ENCODE measurements at regions of chr17 and their contacts with region 1.

Region 1: GRCh38 chr17:58337600-58338453 is 9.2 kb upstream of the TSPOAP1 start:
- DNase-seq: peak; percentile 98
- H3K4me3 Mint-ChIP-seq: peak overlapping the region; percentile 91
- H3K27ac Mint-ChIP-seq: peak overlapping the region; percentile 100
- H3K4me1 Mint-ChIP-seq: peaks cover 59% of the 10 kb centered on the region
- H3K27me3 Mint-ChIP-seq: no peaks in the 10 kb centered on the region

Region 2: DNA sequence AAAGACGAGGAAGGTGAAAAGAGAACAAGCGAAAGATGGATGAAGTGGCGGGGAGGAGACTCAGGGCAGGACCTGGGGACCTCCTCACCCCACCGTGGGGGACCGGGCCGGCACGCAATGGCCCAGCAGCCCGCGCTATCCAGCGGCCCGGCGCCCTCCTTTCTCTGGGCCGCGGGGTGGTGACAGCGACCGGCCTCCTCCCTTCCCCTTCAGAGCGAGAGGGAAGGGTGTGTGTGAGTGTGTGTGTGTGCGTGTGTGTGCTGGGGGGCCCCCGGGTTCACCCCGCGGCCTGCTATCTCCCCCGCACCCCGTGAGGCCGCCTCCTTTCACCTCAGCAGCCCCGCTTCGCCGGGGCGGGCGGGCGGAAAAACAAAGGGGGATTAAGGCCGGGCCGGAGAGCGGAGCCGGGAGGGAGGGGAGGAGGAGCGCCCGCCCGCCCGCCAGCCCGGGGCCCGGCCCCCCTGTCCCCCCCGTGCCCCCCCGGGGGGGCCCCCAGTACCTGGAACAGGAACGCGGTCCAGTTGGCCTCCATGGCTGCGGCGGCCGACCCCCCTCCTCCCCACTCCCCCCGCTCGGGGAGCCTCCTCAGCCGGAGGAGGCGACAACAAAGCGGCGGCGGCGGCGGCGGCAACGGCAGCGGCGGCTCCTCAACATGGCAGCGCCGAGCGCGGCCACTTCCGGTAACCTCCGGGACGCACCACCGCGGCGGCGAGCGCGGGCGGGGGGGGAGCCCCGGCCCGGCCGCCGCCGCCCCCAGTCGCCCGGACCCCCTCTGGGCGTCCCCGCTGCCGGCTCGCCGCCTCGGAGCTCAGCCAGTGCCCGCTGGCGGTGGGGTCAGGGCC is 350.0 kb before region 1 on chr17 and contains the start of gene VEZF1:
- intact Hi-C with region 1: loop called (anchors 5 kb)
- DNase-seq: peak; percentile 93
- H3K4me3 Mint-ChIP-seq: peak within 1 kb of the TSS; percentile 94
- H3K27ac Mint-ChIP-seq: peak within 1 kb of the TSS; percentile 96
- H3K4me1 Mint-ChIP-seq: peaks cover 47% of the 10 kb centered on the region
- H3K27me3 Mint-ChIP-seq: no peaks in the 10 kb centered on the region
- total RNA-seq, gene VEZF1: 35.4 and 37.3 TPM in 2 replicates

Region 3: GRCh38 chr17:58436805-58437239 is 99.0 kb after region 1 on chr17:
- intact Hi-C with region 1: no loop called
- DNase-seq: no peak
- H3K4me3 Mint-ChIP-seq: no peak overlapping the region
- H3K27ac Mint-ChIP-seq: no peak overlapping the region
- H3K4me1 Mint-ChIP-seq: no peaks in the 10 kb centered on the region
- H3K27me3 Mint-ChIP-seq: peaks cover 6% of the 10 kb centered on the region

Region 4: DNA sequence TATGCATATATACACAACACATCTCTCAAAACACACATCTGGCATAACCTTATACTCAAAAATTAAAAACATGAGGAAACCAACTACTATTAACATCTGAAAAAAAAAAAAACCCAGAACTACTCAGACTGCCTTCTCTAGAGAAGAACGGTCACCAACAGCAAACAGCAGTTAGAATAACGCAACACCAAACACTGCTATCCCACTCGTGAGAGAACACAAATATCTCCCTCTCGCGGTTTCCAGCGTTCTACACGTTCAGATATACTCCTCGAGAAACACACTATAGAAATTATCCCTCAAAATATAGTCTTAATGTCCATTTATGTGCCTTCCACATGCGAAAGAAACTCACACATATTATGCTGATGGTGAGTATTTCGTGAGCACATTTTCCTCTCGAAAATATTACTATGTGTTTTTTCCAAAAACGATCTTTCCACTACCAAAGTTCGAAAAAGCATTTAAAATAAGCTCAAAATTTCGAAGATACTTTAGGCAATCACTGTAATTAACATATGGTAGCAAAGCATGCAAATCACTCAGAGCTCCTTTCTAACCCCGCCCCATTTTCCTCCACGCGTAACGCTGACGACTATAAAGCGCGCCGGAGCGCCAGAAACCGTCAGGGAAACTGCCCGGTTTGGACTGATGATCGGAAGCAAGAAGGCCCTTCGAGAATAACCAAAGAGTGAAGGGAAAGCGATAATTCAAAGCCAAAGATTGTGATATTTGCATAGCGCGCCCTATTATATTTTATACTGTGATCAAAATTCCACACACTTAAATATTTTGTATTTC is 293.9 kb after region 1 on chr17:
- intact Hi-C with region 1: loop called (anchors 5 kb)
- DNase-seq: peak; percentile 99
- H3K4me3 Mint-ChIP-seq: no peak overlapping the region
- H3K27ac Mint-ChIP-seq: no peak overlapping the region
- H3K4me1 Mint-ChIP-seq: peaks cover 2% of the 10 kb centered on the region
- H3K27me3 Mint-ChIP-seq: peaks cover 4% of the 10 kb centered on the region

Region 5: DNA sequence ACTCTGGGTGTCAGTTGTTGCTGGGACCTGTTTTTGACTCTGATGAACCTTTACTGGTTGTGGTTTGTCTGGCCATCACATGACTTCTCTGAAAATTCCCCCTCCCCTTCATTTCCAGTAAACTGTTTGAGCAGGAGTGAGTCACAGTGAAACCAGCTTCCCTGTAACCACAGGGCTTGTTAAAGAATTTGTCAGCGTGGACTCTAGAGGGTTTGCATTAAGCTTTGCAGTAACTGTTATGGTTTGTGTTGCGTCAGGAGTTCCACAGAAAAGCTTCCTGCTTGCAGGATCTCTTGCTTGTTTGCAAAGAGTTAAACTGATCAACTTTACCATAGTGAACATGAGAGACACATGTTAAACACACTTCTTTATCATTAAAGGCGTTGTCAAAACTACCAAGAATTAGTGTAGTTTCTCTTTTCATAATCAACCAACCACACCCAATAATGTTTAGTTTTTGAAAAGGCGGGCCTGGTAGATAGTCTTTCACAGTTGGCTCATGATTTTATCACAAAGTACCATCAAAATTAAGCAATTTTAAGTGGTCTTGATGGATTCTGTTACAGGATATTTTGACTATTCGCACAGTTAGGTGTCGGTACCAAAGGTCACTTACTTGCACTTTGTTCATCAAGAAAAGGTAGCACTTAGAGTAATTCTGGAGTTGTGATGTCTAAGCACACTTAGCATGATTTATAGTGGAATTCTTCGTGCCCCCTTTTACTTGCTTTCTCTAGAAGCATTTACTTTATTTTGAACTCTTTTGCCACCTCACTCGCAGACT is 1448.9 kb after region 1 on chr17:
- intact Hi-C with region 1: loop called (anchors 10 kb)
- DNase-seq: peak; percentile 96
- H3K4me3 Mint-ChIP-seq: peak overlapping the region; percentile 83
- H3K27ac Mint-ChIP-seq: peak overlapping the region; percentile 100
- H3K4me1 Mint-ChIP-seq: peaks cover 56% of the 10 kb centered on the region
- H3K27me3 Mint-ChIP-seq: no peaks in the 10 kb centered on the region

Region 6: GRCh38 chr17:59846394-59847165 is 1508.8 kb after region 1 on chr17:
- intact Hi-C with region 1: loop called (anchors 5 kb)
- DNase-seq: peak; percentile 86
- H3K4me3 Mint-ChIP-seq: peak overlapping the region; percentile 47
- H3K27ac Mint-ChIP-seq: peak overlapping the region; percentile 92
- H3K4me1 Mint-ChIP-seq: peaks cover 53% of the 10 kb centered on the region
- H3K27me3 Mint-ChIP-seq: no peaks in the 10 kb centered on the region

Measured in activated CD4-positive, alpha-beta T cell treated with anti-CD3 and anti-CD28 coated beads, Interleukin-2, amount 10 ng/mL, durations not matched to agents 24 days and 14 days (primary cell).